ENCODE measurements at regions of chr3 and their contacts with region 1.

Region 1: DNA sequence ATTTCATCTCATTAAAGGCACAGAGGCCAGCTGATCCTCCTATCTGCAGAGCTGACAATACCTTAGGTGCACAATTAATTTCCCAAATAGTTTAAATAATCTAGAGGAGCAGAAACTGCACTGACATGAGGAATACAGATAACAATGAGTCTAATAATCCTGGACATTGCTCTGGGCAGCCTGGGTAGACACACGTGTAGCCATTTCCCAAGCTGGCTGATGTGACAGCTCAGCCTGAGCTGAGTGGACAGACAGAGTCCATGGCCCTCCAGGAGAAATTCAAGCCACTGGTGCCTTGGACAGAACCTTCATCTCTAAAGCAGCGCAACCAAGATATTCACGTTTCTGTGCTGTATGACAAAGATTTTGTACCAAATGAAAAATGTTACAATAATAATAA is 222.6 kb downstream of the MECOM start:
- DNase-seq: no peak
- H3K4me3 ChIP-seq: no peak overlapping the region
- H3K27ac ChIP-seq: no peak overlapping the region
- H3K4me1 ChIP-seq: no peaks in the 10 kb centered on the region
- H3K27me3 ChIP-seq: no peaks in the 10 kb centered on the region
- CTCF ChIP-seq: no peak

Region 2: GRCh38 chr3:169509359-169509758 is 68.4 kb after region 1 on chr3:
- CTCF ChIA-PET with region 1: no interaction called
- POLR2A ChIA-PET with region 1: interaction called, 21 read pairs
- intact Hi-C with region 1: no loop called
- DNase-seq: no peak
- H3K4me3 ChIP-seq: no peak overlapping the region
- H3K27ac ChIP-seq: no peak overlapping the region
- H3K4me1 ChIP-seq: no peaks in the 10 kb centered on the region
- H3K27me3 ChIP-seq: no peaks in the 10 kb centered on the region
- CTCF ChIP-seq: no peak